Heart right ventricle (tissue), 16 donors: ENCODE measurements at regions of chr2 and their contacts with region 1.

Region 1: DNA sequence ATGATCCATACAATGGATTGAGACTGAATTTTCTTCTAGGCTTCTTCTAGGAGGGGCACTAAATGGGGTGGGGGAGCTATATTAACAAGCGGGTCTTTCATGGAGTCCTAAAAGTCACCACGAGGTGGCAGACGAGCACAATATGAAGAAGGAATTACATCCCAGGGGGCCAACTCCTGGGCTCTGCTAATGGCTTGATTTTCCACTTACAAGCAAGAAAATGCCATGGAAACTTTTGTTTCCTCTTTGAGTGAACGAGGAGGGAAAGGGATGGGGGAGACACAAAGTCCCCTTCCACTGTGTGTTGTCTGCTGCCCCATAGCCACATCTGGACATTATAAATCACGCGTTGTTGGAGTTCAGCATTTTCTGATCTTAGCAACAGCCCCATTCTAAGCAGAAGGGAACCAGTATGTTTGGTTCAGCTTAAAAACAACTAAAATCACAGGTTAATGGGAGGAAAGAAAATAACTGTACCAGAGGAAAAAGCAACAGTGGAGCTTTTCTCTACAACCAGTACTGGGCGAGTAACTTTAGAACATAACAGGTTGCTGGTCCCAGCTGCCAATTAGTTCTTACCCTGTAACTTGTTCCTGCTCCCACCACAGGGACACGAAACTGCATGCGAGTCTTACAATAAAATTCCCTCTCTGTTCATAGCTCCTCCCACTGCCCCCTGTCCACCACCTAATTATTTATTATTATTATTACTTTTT is 285.0 kb upstream of the PARD3B start:
- DNase-seq: peak; percentile 15 to 76
- ATAC-seq: peak; percentile 59 to 87 (median 74)
- H3K4me3 ChIP-seq: no peak overlapping the region
- H3K27ac ChIP-seq: peak overlapping the region in 4 of 10 donors; percentile 13 to 41 (median 32)
- H3K4me1 ChIP-seq: peaks cover 0 to 34% (median 15%) of the 10 kb centered on the region in 9 donors
- H3K27me3 ChIP-seq: peaks cover 0 to 4% (median 0%) of the 10 kb centered on the region in 7 donors
- CTCF ChIP-seq: peak; percentile 67 to 84 (median 81)

Region 2: DNA sequence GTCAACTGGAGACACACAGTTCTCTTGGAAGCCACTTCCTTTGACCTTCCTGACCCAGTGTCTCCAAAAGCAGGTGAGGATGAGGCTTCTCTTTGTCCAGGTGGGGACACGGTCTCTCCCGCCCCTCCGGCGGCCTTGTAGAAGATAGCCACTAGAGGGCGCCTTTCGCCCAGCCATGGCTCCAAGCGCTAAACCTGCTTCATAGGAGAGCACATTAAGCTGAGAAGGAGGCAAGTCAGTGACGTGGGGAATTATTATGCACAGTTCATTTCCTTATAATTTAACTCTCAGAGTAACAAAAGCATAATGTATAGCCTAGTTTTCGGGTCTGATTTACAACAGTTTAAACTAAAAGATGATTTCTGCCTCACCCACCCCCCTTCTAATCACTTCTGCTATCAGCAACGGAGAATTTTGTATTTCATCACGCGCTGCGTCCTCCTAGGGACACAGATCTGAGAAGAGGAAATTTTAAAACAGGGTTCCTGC is 115.0 kb before region 1 on chr2:
- intact Hi-C with region 1: loop called in 1 of 10 experiments (anchors 10 kb)
- DNase-seq: peak; percentile 74 to 79
- ATAC-seq: peak; percentile 87 to 98 (median 96)
- H3K4me3 ChIP-seq: peak overlapping the region; percentile 14 to 59 (median 44)
- H3K27ac ChIP-seq: peak overlapping the region in 6 of 10 donors; percentile 28 to 66 (median 53)
- H3K4me1 ChIP-seq: peaks cover 0 to 11% (median 6%) of the 10 kb centered on the region in 9 donors
- H3K27me3 ChIP-seq: peaks cover 0 to 5% (median 0%) of the 10 kb centered on the region in 7 donors
- CTCF ChIP-seq: peak in 8 of 9 donors; percentile 89 to 98 (median 96)

Region 3: DNA sequence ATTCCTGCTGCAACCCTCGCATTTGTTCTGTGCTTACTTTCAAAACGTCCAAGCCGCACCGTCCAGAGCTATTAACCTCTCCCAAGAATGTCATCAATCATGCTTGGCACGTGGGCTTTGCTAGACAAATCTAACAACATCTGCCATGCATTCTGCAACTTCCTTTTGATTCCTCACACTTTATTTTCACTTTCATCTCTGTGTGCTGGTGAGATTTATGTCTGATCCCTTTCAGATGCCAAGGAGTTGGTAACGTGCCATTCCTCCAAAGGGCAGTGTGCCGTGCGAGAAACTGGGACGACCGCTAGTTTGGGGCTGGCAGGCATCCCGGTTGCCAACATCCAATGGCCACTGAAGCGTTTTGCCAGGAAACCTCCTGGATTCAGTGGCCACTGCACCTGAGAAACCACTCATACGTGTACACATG is 54.9 kb after region 1 on chr2:
- intact Hi-C with region 1: loop called in 1 of 10 experiments (anchors 2 kb)
- DNase-seq: no peak
- ATAC-seq: no peak
- H3K4me3 ChIP-seq: no peak overlapping the region
- H3K27ac ChIP-seq: no peak overlapping the region
- H3K4me1 ChIP-seq: peaks cover 0 to 4% (median 0%) of the 10 kb centered on the region in 9 donors
- H3K27me3 ChIP-seq: peaks cover 0 to 5% (median 0%) of the 10 kb centered on the region in 7 donors
- CTCF ChIP-seq: no peak

Region 4: DNA sequence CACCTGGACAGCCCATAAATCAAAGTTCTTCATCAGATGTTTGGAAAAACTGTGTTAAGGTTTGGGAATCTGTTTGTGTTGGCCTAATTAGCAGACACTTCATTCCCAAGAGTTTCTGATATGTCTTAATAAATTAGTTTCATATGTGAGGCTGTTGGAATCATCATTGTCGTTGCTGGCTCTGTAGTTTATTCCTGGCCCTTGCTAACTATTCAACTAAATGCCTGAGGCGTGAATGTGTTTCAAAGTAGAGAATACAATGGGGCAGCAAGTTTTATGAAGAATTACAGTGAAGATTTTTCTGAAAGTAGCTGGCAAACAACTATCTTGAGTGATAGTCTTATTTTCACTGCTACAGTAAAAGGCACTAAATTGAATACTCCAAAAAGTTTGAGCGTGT is 426.1 kb after region 1 on chr2:
- intact Hi-C with region 1: loop called in 6 of 10 experiments (anchors 5 to 10 kb)
- DNase-seq: no peak
- ATAC-seq: no peak
- H3K4me3 ChIP-seq: no peak overlapping the region
- H3K27ac ChIP-seq: no peak overlapping the region
- H3K4me1 ChIP-seq: peaks cover 0 to 5% (median 0%) of the 10 kb centered on the region in 9 donors
- H3K27me3 ChIP-seq: no peaks in the 10 kb centered on the region
- CTCF ChIP-seq: no peak

Region 5: DNA sequence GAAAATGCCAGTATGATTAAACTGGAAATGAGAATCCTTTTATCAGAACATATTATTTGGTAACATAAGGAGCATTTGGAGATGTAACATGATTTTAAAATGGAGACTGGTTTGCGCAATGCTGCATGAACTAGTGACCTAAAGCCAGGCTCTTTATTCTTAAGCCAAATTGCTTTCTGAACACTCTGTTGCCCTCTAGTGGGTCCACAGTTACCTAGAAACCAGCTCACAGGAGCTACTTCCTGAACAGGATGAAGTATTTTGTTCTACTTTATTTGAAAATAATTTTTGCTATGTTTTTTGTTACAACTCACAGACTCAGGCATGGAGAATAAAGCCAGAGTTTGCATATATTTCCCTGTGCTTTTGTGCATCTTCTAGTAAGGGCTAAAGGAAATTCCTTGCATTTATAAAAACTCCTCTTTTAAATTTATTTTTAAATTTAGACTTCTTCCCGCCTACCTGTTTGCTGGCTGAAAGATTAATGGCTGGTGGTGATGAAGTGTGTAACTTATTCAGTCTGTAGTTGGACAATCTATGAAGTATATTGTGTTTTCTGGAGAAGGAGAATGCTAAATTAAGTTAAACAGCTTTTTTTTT is 431.7 kb after region 1 on chr2:
- intact Hi-C with region 1: loop called in 6 of 10 experiments (anchors 5 to 10 kb)
- DNase-seq: peak in 1 of 2 donors; percentile 67
- ATAC-seq: peak in 7 of 8 donors; percentile 75 to 90 (median 85)
- H3K4me3 ChIP-seq: no peak overlapping the region
- H3K27ac ChIP-seq: peak overlapping the region in 1 of 10 donors; percentile 37
- H3K4me1 ChIP-seq: peaks cover 0 to 14% (median 3%) of the 10 kb centered on the region in 9 donors
- H3K27me3 ChIP-seq: no peaks in the 10 kb centered on the region
- CTCF ChIP-seq: peak; percentile 48 to 90 (median 76)

Region 6: DNA sequence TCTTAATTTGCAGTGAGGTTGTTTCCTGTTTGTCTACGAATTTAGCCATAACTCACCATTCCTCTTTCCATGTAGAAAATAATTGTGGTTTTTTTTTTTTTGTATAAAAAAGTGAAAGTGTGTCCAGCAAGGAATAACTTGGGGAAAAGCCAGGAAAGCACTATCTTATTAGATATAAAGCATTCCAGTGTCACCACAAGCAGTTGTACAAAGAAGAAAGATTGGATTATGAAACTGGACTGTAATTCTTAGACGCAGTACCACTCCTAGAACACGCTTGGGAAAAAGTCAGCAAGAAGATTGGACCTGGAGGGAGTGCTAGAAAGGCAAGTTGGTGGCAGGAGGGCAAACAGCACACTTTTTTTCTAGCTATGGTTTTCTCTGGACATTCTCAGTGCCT is 471.7 kb after region 1 on chr2:
- intact Hi-C with region 1: no loop called
- DNase-seq: no peak
- ATAC-seq: no peak
- H3K4me3 ChIP-seq: no peak overlapping the region
- H3K27ac ChIP-seq: no peak overlapping the region
- H3K4me1 ChIP-seq: peaks cover 0 to 5% (median 0%) of the 10 kb centered on the region in 9 donors
- H3K27me3 ChIP-seq: no peaks in the 10 kb centered on the region
- CTCF ChIP-seq: no peak

Region 7: GRCh38 chr2:205947621-205948495 is 1687.5 kb after region 1 on chr2:
- intact Hi-C with region 1: loop called in 2 of 10 experiments (anchors 10 kb)
- DNase-seq: peak; percentile 57 to 65
- ATAC-seq: peak; percentile 71 to 93 (median 90)
- H3K4me3 ChIP-seq: no peak overlapping the region
- H3K27ac ChIP-seq: peak overlapping the region in 3 of 10 donors; percentile 2 to 22 (median 2)
- H3K4me1 ChIP-seq: peaks cover 0 to 33% (median 0%) of the 10 kb centered on the region in 9 donors
- H3K27me3 ChIP-seq: peaks cover 0 to 8% (median 0%) of the 10 kb centered on the region in 7 donors
- CTCF ChIP-seq: peak; percentile 62 to 99 (median 91)